PC-3 (cell line): ENCODE measurements at regions of chr7 and their contacts with region 1.

Region 1: GRCh38 chr7:3300651-3301378 is at the start of gene SDK1:
- DNase-seq: peak; percentile 83
- ATAC-seq: peak; percentile 90
- H3K4me3 ChIP-seq: peak within 1 kb of the TSS; percentile 67
- H3K27ac ChIP-seq: no peak within 1 kb of the TSS
- H3K4me1 ChIP-seq: no peaks in the 10 kb centered on the region; the same call in 1 of the 2 replicates
- H3K27me3 ChIP-seq: peaks cover 26% of the 10 kb centered on the region
- CTCF ChIP-seq: peak; percentile 66
- total RNA-seq, gene SDK1: 2.8 and 4.8 TPM in 2 replicates

Region 2: DNA sequence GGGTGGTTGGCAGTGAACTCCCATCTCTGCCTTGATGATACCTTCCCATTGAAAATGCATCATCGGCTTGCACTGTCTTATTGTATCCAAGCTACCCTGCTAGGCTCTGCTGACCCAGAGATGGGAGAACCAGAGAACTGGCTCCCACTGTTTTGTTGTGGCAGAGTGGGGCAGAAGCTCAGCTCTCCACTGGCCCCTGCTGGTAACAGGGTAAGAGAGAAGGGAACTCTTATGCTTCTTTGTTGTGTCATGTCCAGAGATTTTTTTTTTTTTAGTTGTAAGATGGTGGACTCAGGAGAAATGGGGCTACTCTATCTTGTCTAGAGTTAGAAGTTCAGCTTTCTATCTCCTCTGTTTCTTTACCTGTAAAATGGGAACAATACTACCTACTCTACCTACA is 100.3 kb before region 1 on chr7:
- CTCF ChIA-PET with region 1: interaction called, 12 read pairs
- POLR2A ChIA-PET with region 1: no interaction called
- intact Hi-C with region 1: no loop called
- DNase-seq: peak; percentile 39
- ATAC-seq: peak; percentile 61; the same call in 1 of the 2 replicates
- H3K4me3 ChIP-seq: no peak overlapping the region
- H3K27ac ChIP-seq: no peak overlapping the region
- H3K4me1 ChIP-seq: no peaks in the 10 kb centered on the region
- H3K27me3 ChIP-seq: no peaks in the 10 kb centered on the region
- CTCF ChIP-seq: peak; percentile 61

Region 3: GRCh38 chr7:3239291-3239691 is 61.5 kb before region 1 on chr7:
- CTCF ChIA-PET with region 1: no interaction called
- POLR2A ChIA-PET with region 1: no interaction called
- intact Hi-C with region 1: no loop called
- DNase-seq: peak; percentile 74
- ATAC-seq: no peak
- H3K4me3 ChIP-seq: no peak overlapping the region
- H3K27ac ChIP-seq: no peak overlapping the region
- H3K4me1 ChIP-seq: peaks cover 28% of the 10 kb centered on the region
- H3K27me3 ChIP-seq: no peaks in the 10 kb centered on the region
- CTCF ChIP-seq: no peak

Region 4: DNA sequence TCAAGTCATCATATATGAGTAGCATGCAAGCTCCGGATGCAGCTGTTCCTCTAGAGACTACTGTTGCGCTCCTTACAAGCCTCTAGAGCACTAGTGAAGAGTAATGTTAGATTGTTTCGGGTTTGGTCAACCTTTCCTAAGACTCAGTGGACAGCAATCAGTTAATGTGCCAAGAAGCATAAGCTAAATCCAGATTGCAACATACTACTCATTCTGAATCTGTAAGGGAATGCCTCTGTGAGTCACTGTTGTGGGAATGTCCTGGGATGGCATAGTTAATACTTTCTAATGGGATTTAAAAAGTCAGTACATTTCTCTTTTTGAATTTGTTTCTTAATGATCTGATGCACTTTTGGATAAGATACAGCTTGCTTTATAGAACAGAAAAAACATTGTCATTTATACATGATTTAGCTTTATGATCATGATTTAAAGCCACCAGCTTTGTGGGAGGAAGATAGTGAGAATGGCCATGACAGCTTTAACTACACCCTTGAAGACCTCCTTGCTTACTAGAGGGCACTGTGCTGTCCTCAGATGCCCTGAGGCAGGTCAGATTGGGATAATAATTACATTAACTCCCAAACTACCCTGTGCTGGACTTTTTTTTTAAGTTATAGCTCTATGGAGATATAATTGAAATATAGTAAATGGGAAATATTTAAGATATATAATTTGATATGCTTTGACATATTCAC is 138.7 kb after region 1 on chr7:
- CTCF ChIA-PET with region 1: no interaction called
- POLR2A ChIA-PET with region 1: no interaction called
- intact Hi-C with region 1: loop called (anchors 5 kb)
- DNase-seq: peak; percentile 86
- ATAC-seq: peak; percentile 76
- H3K4me3 ChIP-seq: peak overlapping the region; percentile 28; the same call in 1 of the 2 replicates
- H3K27ac ChIP-seq: peak overlapping the region; percentile 37; the same call in 1 of the 2 replicates
- H3K4me1 ChIP-seq: peaks cover 34% of the 10 kb centered on the region
- H3K27me3 ChIP-seq: no peaks in the 10 kb centered on the region
- CTCF ChIP-seq: no peak